Caco-2 (cell line): ENCODE measurements at regions of chr11 and their contacts with region 1.

Region 1: GRCh38 chr11:73961321-73961720 is 10.5 kb downstream of the DNAJB13 start:
- DNase-seq: peak in 1 of 2 experiments; percentile 32
- H3K4me3 ChIP-seq: no peak overlapping the region
- H3K4me3 Mint-ChIP-seq: no peak overlapping the region
- H3K27ac Mint-ChIP-seq: no peak overlapping the region
- H3K4me1 ChIP-seq: no peaks in the 10 kb centered on the region
- H3K4me1 Mint-ChIP-seq: peaks cover 1% of the 10 kb centered on the region
- H3K27me3 ChIP-seq: no peaks in the 10 kb centered on the region; the same call in 1 of the 2 replicates
- H3K27me3 Mint-ChIP-seq: no peaks in the 10 kb centered on the region
- CTCF ChIP-seq: no peak

Region 2: GRCh38 chr11:74226907-74227306 is 265.6 kb after region 1 on chr11:
- CTCF ChIA-PET with region 1: interaction called, 3 read pairs
- POLR2A ChIA-PET with region 1: no interaction called
- intact Hi-C with region 1: loop called (anchors 1 kb)
- DNase-seq: peak in 1 of 2 experiments; percentile 48
- H3K4me3 ChIP-seq: no peak overlapping the region
- H3K4me3 Mint-ChIP-seq: no peak overlapping the region
- H3K27ac Mint-ChIP-seq: no peak overlapping the region
- H3K4me1 ChIP-seq: no peaks in the 10 kb centered on the region
- H3K4me1 Mint-ChIP-seq: peaks cover 9% of the 10 kb centered on the region
- H3K27me3 ChIP-seq: no peaks in the 10 kb centered on the region
- H3K27me3 Mint-ChIP-seq: no peaks in the 10 kb centered on the region
- CTCF ChIP-seq: peak in 1 of 2 experiments; percentile 27